ENCODE measurements at regions of chr4 and their contacts with region 1.

Region 1: GRCh38 chr4:153573881-153574802 is 108.0 kb downstream of the TMEM131L start:
- DNase-seq: peak; percentile 42
- H3K4me3 Mint-ChIP-seq: no peak overlapping the region
- H3K27ac Mint-ChIP-seq: no peak overlapping the region
- H3K4me1 Mint-ChIP-seq: no peaks in the 10 kb centered on the region
- H3K27me3 Mint-ChIP-seq: no peaks in the 10 kb centered on the region
- CTCF ChIP-seq: no peak

Region 2: GRCh38 chr4:153142700-153143438 is 431.3 kb before region 1 on chr4:
- CTCF ChIA-PET with region 1: interaction called, 3 read pairs
- intact Hi-C with region 1: loop called (anchors 1 kb)
- DNase-seq: peak; percentile 75
- H3K4me3 Mint-ChIP-seq: peak overlapping the region; percentile 58
- H3K27ac Mint-ChIP-seq: peak overlapping the region; percentile 95
- H3K4me1 Mint-ChIP-seq: peaks cover 62% of the 10 kb centered on the region
- H3K27me3 Mint-ChIP-seq: no peaks in the 10 kb centered on the region
- CTCF ChIP-seq: peak; percentile 62

Region 3: GRCh38 chr4:153344131-153345010 is 229.8 kb before region 1 on chr4 and contains the start of gene MND1:
- CTCF ChIA-PET with region 1: interaction called, 8 read pairs
- intact Hi-C with region 1: loop called (anchors 1 kb)
- DNase-seq: peak; percentile 89
- H3K4me3 Mint-ChIP-seq: peak within 1 kb of the TSS; percentile 75
- H3K27ac Mint-ChIP-seq: peak within 1 kb of the TSS; percentile 44
- H3K4me1 Mint-ChIP-seq: peaks cover 41% of the 10 kb centered on the region
- H3K27me3 Mint-ChIP-seq: no peaks in the 10 kb centered on the region
- CTCF ChIP-seq: peak; percentile 81
- total RNA-seq, gene MND1: 12.6 and 13.1 TPM in 2 replicates

Region 4: DNA sequence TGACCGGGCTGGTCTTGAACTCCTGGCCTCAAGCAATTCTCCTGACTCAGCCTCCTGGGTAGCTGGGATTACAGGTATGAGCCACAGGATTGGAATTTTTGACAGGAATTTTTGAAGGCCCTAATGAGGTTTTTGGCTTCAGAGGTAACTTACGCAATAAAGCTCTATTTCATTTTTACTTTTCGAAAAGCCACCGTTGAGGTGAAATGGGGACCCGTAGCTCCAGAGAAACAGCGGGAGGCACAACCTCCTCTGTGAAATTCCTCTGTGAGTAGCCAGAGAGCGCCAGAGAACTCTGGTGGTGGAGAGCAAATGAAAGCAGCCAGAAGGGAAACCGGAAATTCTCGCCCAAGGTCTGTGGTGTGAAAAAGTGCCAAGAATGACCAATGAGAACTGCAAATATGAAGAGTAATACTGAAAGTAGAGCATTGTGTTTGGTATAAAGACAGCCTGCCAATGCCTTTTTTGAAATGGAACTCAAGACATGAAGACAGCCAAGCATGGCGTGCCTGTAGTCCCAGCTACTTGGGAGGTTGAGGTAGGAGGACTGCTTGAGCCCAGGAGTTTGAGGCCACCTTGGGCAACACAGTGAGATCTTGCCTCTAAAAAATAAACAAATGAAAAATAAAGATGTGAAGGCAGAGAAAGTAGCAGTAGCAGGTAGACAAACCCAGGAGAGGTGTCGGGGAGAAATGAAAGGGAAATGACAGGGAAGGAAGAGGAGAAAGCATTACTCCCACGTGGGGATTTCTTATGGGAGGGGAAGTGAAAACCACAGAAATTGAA is 141.0 kb before region 1 on chr4:
- CTCF ChIA-PET with region 1: interaction called, 13 read pairs
- intact Hi-C with region 1: loop called (anchors 1 kb)
- DNase-seq: peak; percentile 61
- H3K4me3 Mint-ChIP-seq: no peak overlapping the region
- H3K27ac Mint-ChIP-seq: no peak overlapping the region
- H3K4me1 Mint-ChIP-seq: peaks cover 9% of the 10 kb centered on the region
- H3K27me3 Mint-ChIP-seq: no peaks in the 10 kb centered on the region
- CTCF ChIP-seq: peak; percentile 31

Region 5: DNA sequence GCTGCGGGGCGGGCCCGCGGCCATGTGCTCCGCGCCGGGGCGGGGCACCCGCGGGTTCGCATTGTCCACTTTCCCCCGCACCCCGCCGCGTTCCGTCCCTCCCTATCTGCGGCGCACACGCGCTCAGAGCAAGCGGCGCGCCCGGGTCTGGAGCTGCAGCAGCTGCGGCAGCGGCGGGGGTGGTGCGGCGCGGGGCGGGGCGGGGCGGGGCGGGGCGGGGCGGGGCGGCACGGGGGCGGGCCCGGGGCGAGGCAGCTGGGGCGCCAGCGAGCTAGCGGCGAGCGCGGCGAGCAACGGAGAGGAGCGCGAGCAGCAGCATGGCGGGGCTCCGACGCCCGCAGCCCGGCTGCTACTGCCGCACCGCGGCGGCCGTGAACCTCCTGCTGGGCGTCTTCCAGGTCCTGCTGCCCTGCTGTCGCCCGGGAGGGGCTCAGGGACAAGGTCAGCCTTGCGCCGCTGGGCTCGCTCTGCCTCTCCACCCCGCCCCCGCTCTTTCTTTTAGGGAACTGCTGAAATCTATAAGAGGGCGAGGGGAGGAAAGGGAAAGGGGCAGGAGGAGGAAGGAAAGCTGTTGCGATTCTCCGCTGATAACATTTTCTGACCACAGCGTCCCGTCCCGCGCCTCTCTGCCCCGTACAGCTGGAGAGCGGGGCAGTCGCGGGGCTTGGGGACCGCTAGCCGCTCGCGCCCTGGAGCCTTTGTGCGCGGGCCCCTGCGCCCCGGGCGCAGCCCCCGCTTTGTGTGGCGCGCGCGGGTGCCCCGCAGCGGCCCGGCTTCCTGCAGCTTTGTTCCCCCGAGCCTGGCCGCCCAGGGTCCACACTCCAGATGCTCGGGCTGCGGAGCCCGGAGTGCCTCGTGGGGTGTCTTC is 107.8 kb before region 1 on chr4 and contains the start of gene TMEM131L:
- CTCF ChIA-PET with region 1: interaction called, 8 read pairs
- intact Hi-C with region 1: loop called (anchors 10 kb)
- DNase-seq: peak; percentile 50
- H3K4me3 Mint-ChIP-seq: peak within 1 kb of the TSS; percentile 82
- H3K27ac Mint-ChIP-seq: peak within 1 kb of the TSS; percentile 62
- H3K4me1 Mint-ChIP-seq: peaks cover 6% of the 10 kb centered on the region
- H3K27me3 Mint-ChIP-seq: no peaks in the 10 kb centered on the region
- CTCF ChIP-seq: no peak
- total RNA-seq, gene TMEM131L: 8.8 and 9.4 TPM in 2 replicates